HepG2 (cell line): ENCODE measurements at regions of chr16 and their contacts with region 1.

Region 1: GRCh38 chr16:2980227-2981086 is at the start of gene PKMYT1:
- DNase-seq: peak; percentile 73
- ATAC-seq: peak; percentile 83
- H3K4me3 ChIP-seq: peak within 1 kb of the TSS; percentile 86 to 95 (median 88)
- H3K27ac ChIP-seq: peak within 1 kb of the TSS; percentile 87
- H3K4me1 ChIP-seq: peaks cover 26% of the 10 kb centered on the region
- H3K27me3 ChIP-seq: peaks cover under 1 to 11% of the 10 kb centered on the region in 2 experiments; a peak in 4 of 5 replicates
- CTCF ChIP-seq: no peak; the same call in 1 of the 2 replicates
- EP300 ChIP-seq: no peak
- POLR2A ChIP-seq: peak; percentile 82 to 96
- RAD21 ChIP-seq: no peak
- total RNA-seq, gene PKMYT1: 8.4 and 27.8 TPM in 2 replicates

Region 2: DNA sequence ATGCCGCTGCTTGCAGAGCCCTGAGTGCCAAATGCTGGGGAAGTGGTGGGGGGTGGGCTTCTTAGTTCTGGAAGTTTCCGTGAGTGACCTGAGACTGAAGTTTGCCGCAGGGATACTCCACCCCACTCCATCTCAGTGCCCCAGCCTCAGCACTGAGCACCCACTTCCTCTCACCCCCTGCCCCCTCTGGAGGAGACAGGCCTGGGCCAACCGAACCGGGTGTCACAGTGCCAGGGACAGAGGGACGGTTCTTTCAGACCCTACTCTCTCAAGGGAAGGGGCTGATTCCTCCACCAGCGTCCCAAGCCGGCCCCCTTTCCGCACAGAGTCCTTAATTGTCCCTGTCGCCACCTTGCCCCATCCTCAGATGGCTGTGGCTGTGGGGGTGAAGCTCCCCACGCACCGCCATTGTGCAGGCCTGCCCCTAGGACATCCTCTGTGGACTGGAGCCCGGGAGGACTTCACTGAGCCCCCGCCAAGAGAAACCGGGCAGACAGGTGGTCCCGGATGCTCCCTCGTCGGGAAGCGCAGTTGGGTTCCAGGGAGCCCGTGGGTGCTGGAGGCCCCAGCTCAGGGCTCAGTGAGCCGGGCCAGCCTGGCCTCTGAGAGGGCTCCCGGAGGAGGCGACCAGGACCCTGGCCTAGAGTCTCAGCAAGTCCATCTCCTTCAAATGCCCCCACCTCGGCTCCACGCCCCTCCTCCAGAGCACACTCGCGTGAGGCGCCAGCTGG is 18.0 kb before region 1 on chr16:
- CTCF ChIA-PET with region 1: interaction called, 12 read pairs
- POLR2A ChIA-PET with region 1: interaction called, 11 read pairs
- in situ Hi-C with region 1: no loop called
- intact Hi-C with region 1: loop called (anchors 2 kb)
- DNase-seq: no peak
- ATAC-seq: peak; percentile 3; the same call in 2 of the 3 replicates
- H3K4me3 ChIP-seq: peak overlapping the region in 2 of 3 experiments; percentile 63 to 78; a peak in 3 of 6 replicates
- H3K27ac ChIP-seq: no peak overlapping the region
- H3K4me1 ChIP-seq: peaks cover 23% of the 10 kb centered on the region
- H3K27me3 ChIP-seq: peaks cover 0 to 15% of the 10 kb centered on the region in 2 experiments; a peak in 3 of 5 replicates
- CTCF ChIP-seq: no peak
- EP300 ChIP-seq: no peak
- POLR2A ChIP-seq: no peak
- RAD21 ChIP-seq: no peak

Region 3: GRCh38 chr16:2968738-2969544 is 11.5 kb before region 1 on chr16 and contains the start of gene PAQR4:
- CTCF ChIA-PET with region 1: interaction called, 3 read pairs
- POLR2A ChIA-PET with region 1: interaction called, 31 read pairs
- in situ Hi-C with region 1: no loop called
- intact Hi-C with region 1: loop called (anchors 2 kb)
- DNase-seq: peak; percentile 80
- ATAC-seq: peak; percentile 71
- H3K4me3 ChIP-seq: peak within 1 kb of the TSS; percentile 86 to 91 (median 91)
- H3K27ac ChIP-seq: peak within 1 kb of the TSS; percentile 76
- H3K4me1 ChIP-seq: peaks cover 17% of the 10 kb centered on the region
- H3K27me3 ChIP-seq: no peaks in the 10 kb centered on the region; a peak in 1 of 5 replicates
- CTCF ChIP-seq: peak; percentile 30
- EP300 ChIP-seq: peak in 1 of 2 experiments; percentile 28; a peak in 1 of 4 replicates
- POLR2A ChIP-seq: peak; percentile 33 to 80; a peak in 3 of 4 replicates
- RAD21 ChIP-seq: no peak; the same call in 1 of the 2 replicates
- total RNA-seq, gene PAQR4: 15.6 and 24.8 TPM in 2 replicates

Region 4: GRCh38 chr16:3003582-3004302 is 23.3 kb after region 1 on chr16:
- CTCF ChIA-PET with region 1: no interaction called
- POLR2A ChIA-PET with region 1: interaction called, 23 read pairs
- in situ Hi-C with region 1: no loop called
- intact Hi-C with region 1: no loop called
- DNase-seq: peak; percentile 97
- ATAC-seq: peak; percentile 91
- H3K4me3 ChIP-seq: peak overlapping the region in 2 of 3 experiments; percentile 27 to 46; a peak in 2 of 6 replicates
- H3K27ac ChIP-seq: no peak overlapping the region
- H3K4me1 ChIP-seq: peaks cover 49% of the 10 kb centered on the region
- H3K27me3 ChIP-seq: no peaks in the 10 kb centered on the region
- CTCF ChIP-seq: peak; percentile 98
- EP300 ChIP-seq: 0 out of 4 replicates have a peak, but pooled peaks of 1 of the 2 experiments have one; percentile 4
- POLR2A ChIP-seq: no peak; a peak in 1 of 4 replicates
- RAD21 ChIP-seq: peak; percentile 96